ENCODE measurements at regions of chr7 and their contacts with region 1.

Region 1: DNA sequence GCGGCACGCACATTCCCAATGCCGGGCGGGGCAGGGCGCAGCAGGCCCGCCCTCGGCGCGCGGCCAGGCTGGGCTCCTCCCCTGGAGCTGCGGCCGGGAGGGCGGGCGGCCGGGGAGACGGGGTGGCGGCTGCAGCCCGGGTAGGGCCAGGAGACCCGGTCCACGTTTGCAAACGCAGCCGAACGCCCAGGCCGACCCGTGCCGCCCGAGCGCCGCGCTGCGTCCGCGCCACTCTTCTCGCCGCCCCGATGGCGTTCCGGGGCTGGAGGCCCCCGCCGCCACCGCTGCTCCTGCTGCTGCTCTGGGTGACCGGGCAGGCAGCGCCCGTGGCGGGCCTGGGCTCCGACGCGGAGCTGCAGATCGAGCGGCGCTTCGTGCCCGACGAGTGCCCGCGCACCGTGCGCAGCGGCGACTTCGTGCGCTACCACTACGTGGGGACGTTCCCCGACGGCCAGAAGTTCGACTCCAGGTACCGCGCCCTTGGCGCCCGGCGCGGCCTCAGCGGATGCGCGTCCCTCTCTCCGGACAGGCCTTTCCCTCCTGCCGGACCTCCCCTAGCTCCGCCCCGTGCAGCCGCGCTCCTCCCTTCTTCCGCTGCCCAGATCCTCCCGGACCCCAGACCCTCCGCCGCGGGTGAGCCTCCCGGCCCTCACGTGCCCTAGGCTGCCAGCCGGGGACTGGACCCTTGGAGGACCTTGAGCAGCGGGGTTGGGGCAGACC is at the start of gene FKBP9:
- DNase-seq: peak; percentile 86 to 93
- H3K4me3 ChIP-seq: peak within 1 kb of the TSS; percentile 95
- H3K4me3 Mint-ChIP-seq: peak within 1 kb of the TSS; percentile 82
- H3K27ac Mint-ChIP-seq: peak within 1 kb of the TSS; percentile 55
- H3K4me1 ChIP-seq: 0 out of 2 replicates have a peak, but pooled peaks cover 6% of the 10 kb centered on the region
- H3K4me1 Mint-ChIP-seq: no peaks in the 10 kb centered on the region
- H3K27me3 ChIP-seq: no peaks in the 10 kb centered on the region
- H3K27me3 Mint-ChIP-seq: no peaks in the 10 kb centered on the region
- CTCF ChIP-seq: no peak
- total RNA-seq, gene FKBP9: 74.3 and 82.6 TPM in 2 replicates

Region 2: DNA sequence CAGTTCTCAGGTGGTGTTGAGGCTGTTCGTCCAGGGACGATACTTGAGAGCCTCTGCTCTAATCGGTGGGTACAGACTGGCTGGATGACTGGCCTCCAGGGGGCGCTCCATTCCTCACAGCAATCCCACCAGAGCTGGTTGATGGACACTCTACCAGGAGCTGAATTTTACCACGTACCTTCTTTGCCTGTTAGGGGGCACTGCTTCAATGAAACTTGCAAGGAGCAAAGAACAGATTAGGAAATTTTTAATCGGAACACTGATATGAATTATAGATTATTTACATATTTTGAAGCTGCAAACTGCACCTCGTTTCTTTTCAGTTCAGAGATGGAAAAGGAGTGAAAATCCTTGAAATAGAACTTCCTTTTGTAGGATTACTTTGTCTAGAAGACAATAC is 110.8 kb before region 1 on chr7:
- CTCF ChIA-PET with region 1: interaction called, 17 read pairs
- POLR2A ChIA-PET with region 1: no interaction called
- intact Hi-C with region 1: no loop called
- DNase-seq: peak; percentile 87 to 91
- H3K4me3 ChIP-seq: no peak overlapping the region
- H3K4me3 Mint-ChIP-seq: no peak overlapping the region
- H3K27ac Mint-ChIP-seq: no peak overlapping the region
- H3K4me1 ChIP-seq: no peaks in the 10 kb centered on the region; the same call in 1 of the 2 replicates
- H3K4me1 Mint-ChIP-seq: peaks cover 7% of the 10 kb centered on the region
- H3K27me3 ChIP-seq: no peaks in the 10 kb centered on the region
- H3K27me3 Mint-ChIP-seq: peaks cover 3% of the 10 kb centered on the region
- CTCF ChIP-seq: peak; percentile 89 to 94

Region 3: GRCh38 chr7:33040803-33041516 is 83.5 kb after region 1 on chr7:
- CTCF ChIA-PET with region 1: interaction called, 3 read pairs
- POLR2A ChIA-PET with region 1: no interaction called
- intact Hi-C with region 1: loop called (anchors 5 kb)
- DNase-seq: no peak
- H3K4me3 ChIP-seq: no peak overlapping the region
- H3K4me3 Mint-ChIP-seq: no peak overlapping the region
- H3K27ac Mint-ChIP-seq: no peak overlapping the region
- H3K4me1 ChIP-seq: peaks cover 32% of the 10 kb centered on the region
- H3K4me1 Mint-ChIP-seq: peaks cover 31% of the 10 kb centered on the region
- H3K27me3 ChIP-seq: no peaks in the 10 kb centered on the region
- H3K27me3 Mint-ChIP-seq: no peaks in the 10 kb centered on the region
- CTCF ChIP-seq: no peak

Region 4: GRCh38 chr7:33062782-33063443 is 105.4 kb after region 1 on chr7:
- CTCF ChIA-PET with region 1: interaction called, 3 read pairs
- POLR2A ChIA-PET with region 1: interaction called, 13 read pairs
- intact Hi-C with region 1: loop called (anchors 2 kb)
- DNase-seq: peak; percentile 94
- H3K4me3 ChIP-seq: peak overlapping the region; percentile 91
- H3K4me3 Mint-ChIP-seq: peak overlapping the region; percentile 97
- H3K27ac Mint-ChIP-seq: peak overlapping the region; percentile 87
- H3K4me1 ChIP-seq: 0 out of 2 replicates have a peak, but pooled peaks cover 5% of the 10 kb centered on the region
- H3K4me1 Mint-ChIP-seq: peaks cover 7% of the 10 kb centered on the region
- H3K27me3 ChIP-seq: no peaks in the 10 kb centered on the region
- H3K27me3 Mint-ChIP-seq: no peaks in the 10 kb centered on the region
- CTCF ChIP-seq: no peak